ENCODE measurements at regions of chr17 and their contacts with region 1.

Region 1: GRCh38 chr17:27654654-27655524 is 23.9 kb downstream of the LGALS9 start:
- DNase-seq: peak; percentile 75 to 93
- H3K4me3 ChIP-seq: no peak overlapping the region
- H3K27ac ChIP-seq: no peak overlapping the region
- H3K4me1 ChIP-seq: no peaks in the 10 kb centered on the region
- H3K27me3 ChIP-seq: no peaks in the 10 kb centered on the region
- CTCF ChIP-seq: peak; percentile 70 to 89 (median 84)
- EP300 ChIP-seq: no peak; a peak in 1 of 3 replicates
- POLR2A ChIP-seq: no peak
- RAD21 ChIP-seq: peak; percentile 57 to 62

Region 2: GRCh38 chr17:27236717-27237315 is 418.1 kb before region 1 on chr17:
- CTCF ChIA-PET with region 1: interaction called, 10 read pairs
- POLR2A ChIA-PET with region 1: no interaction called
- DNase-seq: peak in 1 of 2 experiments; percentile 86
- H3K4me3 ChIP-seq: no peak overlapping the region
- H3K27ac ChIP-seq: no peak overlapping the region
- H3K4me1 ChIP-seq: no peaks in the 10 kb centered on the region; a peak in 1 of 7 replicates
- H3K27me3 ChIP-seq: no peaks in the 10 kb centered on the region
- CTCF ChIP-seq: peak in 2 of 3 experiments; percentile 66 to 75; a peak in 3 of 4 replicates
- EP300 ChIP-seq: no peak
- POLR2A ChIP-seq: no peak
- RAD21 ChIP-seq: peak; percentile 82 to 84

Region 3: DNA sequence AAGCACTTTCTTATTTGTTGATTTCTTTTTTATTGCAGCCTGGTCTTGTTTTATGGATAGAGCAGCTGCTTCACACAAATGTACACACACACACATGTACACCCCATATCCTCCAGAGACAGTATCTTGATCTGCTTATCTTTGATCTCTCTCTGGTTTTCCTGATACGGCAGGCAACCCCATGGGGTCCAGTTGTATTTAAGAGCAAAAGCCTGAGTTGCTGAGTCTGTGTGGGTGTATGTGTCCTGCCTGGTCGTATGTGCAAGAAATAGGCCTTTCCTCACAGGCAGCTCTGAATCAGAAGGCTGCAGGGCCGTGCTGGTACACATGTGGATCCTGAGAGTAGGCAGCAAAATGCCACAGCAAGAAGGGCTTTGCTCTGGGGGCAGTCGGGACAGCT is 38.5 kb before region 1 on chr17:
- CTCF ChIA-PET with region 1: interaction called, 305 read pairs
- POLR2A ChIA-PET with region 1: no interaction called
- DNase-seq: no peak
- H3K4me3 ChIP-seq: no peak overlapping the region
- H3K27ac ChIP-seq: no peak overlapping the region
- H3K4me1 ChIP-seq: no peaks in the 10 kb centered on the region
- H3K27me3 ChIP-seq: no peaks in the 10 kb centered on the region
- CTCF ChIP-seq: no peak
- EP300 ChIP-seq: no peak
- POLR2A ChIP-seq: no peak
- RAD21 ChIP-seq: no peak

Region 4: GRCh38 chr17:27666831-27667560 is 12.1 kb after region 1 on chr17:
- CTCF ChIA-PET with region 1: interaction called, 41 read pairs
- POLR2A ChIA-PET with region 1: no interaction called
- DNase-seq: no peak
- H3K4me3 ChIP-seq: no peak overlapping the region
- H3K27ac ChIP-seq: no peak overlapping the region
- H3K4me1 ChIP-seq: no peaks in the 10 kb centered on the region
- H3K27me3 ChIP-seq: no peaks in the 10 kb centered on the region
- CTCF ChIP-seq: no peak
- EP300 ChIP-seq: no peak
- POLR2A ChIP-seq: no peak
- RAD21 ChIP-seq: no peak

Region 5: GRCh38 chr17:27692766-27693165 is 37.9 kb after region 1 on chr17:
- CTCF ChIA-PET with region 1: no interaction called
- POLR2A ChIA-PET with region 1: no interaction called
- DNase-seq: no peak
- H3K4me3 ChIP-seq: no peak overlapping the region
- H3K27ac ChIP-seq: no peak overlapping the region
- H3K4me1 ChIP-seq: no peaks in the 10 kb centered on the region
- H3K27me3 ChIP-seq: no peaks in the 10 kb centered on the region
- CTCF ChIP-seq: no peak
- EP300 ChIP-seq: no peak
- POLR2A ChIP-seq: no peak
- RAD21 ChIP-seq: no peak

Region 6: DNA sequence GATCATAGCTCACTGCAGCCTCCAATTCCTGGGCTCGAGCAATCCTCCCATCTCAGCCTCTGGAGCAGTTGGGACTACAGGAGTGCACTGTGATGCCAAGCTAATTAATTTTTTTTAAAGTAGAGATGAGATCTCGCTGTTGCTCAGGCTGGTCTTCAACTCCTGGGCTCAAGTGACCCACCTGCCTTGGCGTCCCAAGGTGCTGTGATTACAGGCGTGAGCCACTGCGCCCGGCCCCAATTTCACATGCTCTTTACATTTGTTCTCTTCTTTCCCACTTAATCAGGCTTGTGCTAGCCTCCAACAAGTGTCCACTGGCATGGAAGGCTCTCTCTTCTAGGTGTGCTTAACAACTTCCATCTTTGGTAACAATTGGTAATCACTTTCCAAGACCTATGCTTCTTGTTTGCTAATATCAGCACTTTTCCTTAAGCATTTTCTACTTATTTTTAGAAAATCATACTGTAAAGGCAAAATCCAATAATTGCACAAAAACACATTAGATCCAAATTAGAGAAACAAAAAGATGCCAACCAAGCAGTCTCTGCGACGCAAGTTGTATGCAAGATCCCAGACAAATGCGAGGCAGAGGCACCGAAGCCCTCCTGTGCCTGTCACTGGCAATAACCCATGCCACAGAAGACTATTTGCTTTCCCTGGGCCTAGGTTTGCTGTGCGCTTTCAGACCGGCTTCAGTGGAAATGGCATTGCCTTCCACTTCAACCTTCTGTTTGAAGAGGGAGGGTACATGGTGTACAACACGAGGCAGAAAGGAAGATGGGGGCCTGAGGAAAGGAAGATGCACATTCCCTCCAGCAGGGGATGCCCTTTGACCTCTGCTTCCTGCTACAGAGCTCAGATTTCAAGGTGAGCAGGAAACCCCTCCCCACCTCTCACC is 92.8 kb after region 1 on chr17:
- CTCF ChIA-PET with region 1: interaction called, 338 read pairs
- POLR2A ChIA-PET with region 1: no interaction called
- DNase-seq: peak; percentile 43 to 81
- H3K4me3 ChIP-seq: no peak overlapping the region
- H3K27ac ChIP-seq: no peak overlapping the region
- H3K4me1 ChIP-seq: 0 out of 7 replicates have a peak, but pooled peaks cover 0 to 2% (median 0%) of the 10 kb centered on the region in 4 experiments
- H3K27me3 ChIP-seq: no peaks in the 10 kb centered on the region; a peak in 1 of 7 replicates
- CTCF ChIP-seq: peak; percentile 62 to 90 (median 72)
- EP300 ChIP-seq: peak in 1 of 2 experiments; percentile 49; a peak in 1 of 3 replicates
- POLR2A ChIP-seq: no peak
- RAD21 ChIP-seq: peak; percentile 28 to 32; a peak in 2 of 4 replicates

Region 7: GRCh38 chr17:27879987-27880608 is 225.2 kb after region 1 on chr17:
- CTCF ChIA-PET with region 1: interaction called, 40 read pairs
- POLR2A ChIA-PET with region 1: no interaction called
- DNase-seq: peak; percentile 43 to 87
- H3K4me3 ChIP-seq: no peak overlapping the region
- H3K27ac ChIP-seq: no peak overlapping the region
- H3K4me1 ChIP-seq: no peaks in the 10 kb centered on the region; a peak in 1 of 7 replicates
- H3K27me3 ChIP-seq: 0 out of 7 replicates have a peak, but pooled peaks cover 0 to 2% (median 0%) of the 10 kb centered on the region in 4 experiments
- CTCF ChIP-seq: peak; percentile 95 to 100 (median 97)
- EP300 ChIP-seq: no peak
- POLR2A ChIP-seq: no peak
- RAD21 ChIP-seq: peak; percentile 99